PC-9 (cell line): ENCODE measurements at regions of chr7 and their contacts with region 1.

Region 1: DNA sequence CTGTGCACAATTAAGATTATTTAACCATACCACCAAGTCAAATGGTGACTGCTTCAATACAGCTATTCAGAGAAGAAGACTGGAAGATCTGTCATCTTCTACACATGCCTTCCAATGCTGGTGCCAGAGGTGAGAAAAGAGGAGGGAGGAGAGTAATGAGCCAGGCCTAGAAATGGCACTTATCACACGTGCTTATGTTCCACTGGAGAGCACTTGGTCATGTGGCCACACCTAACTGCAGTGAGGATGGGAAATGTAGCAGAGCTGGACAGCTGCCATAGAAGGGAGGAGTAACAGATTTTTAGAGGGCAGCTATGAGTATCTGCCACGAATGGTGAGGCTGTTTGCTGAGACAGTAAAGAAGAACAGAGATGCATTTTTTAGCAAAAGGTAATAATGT is 77.1 kb downstream of the MPLKIP start:
- DNase-seq: no peak
- H3K4me3 ChIP-seq: no peak overlapping the region
- H3K27ac ChIP-seq: no peak overlapping the region
- H3K4me1 ChIP-seq: no peaks in the 10 kb centered on the region
- H3K27me3 ChIP-seq: no peaks in the 10 kb centered on the region
- CTCF ChIP-seq: no peak

Region 2: GRCh38 chr7:39580149-39580874 is 477.0 kb before region 1 on chr7:
- CTCF ChIA-PET with region 1: interaction called, 13 read pairs
- POLR2A ChIA-PET with region 1: no interaction called
- intact Hi-C with region 1: loop called (anchors 2 kb)
- DNase-seq: peak; percentile 75 to 81
- H3K4me3 ChIP-seq: no peak overlapping the region
- H3K27ac ChIP-seq: no peak overlapping the region
- H3K4me1 ChIP-seq: no peaks in the 10 kb centered on the region
- H3K27me3 ChIP-seq: no peaks in the 10 kb centered on the region
- CTCF ChIP-seq: peak; percentile 97

Region 3: GRCh38 chr7:39746103-39746819 is 311.0 kb before region 1 on chr7:
- CTCF ChIA-PET with region 1: interaction called, 3 read pairs
- POLR2A ChIA-PET with region 1: no interaction called
- intact Hi-C with region 1: loop called (anchors 10 kb)
- DNase-seq: peak; percentile 57 to 73
- H3K4me3 ChIP-seq: no peak overlapping the region
- H3K27ac ChIP-seq: no peak overlapping the region
- H3K4me1 ChIP-seq: peaks cover 6% of the 10 kb centered on the region
- H3K27me3 ChIP-seq: no peaks in the 10 kb centered on the region
- CTCF ChIP-seq: peak; percentile 94

Region 4: GRCh38 chr7:39894904-39895303 is 162.4 kb before region 1 on chr7:
- CTCF ChIA-PET with region 1: interaction called, 8 read pairs
- POLR2A ChIA-PET with region 1: no interaction called
- intact Hi-C with region 1: loop called (anchors 1 kb)
- DNase-seq: no peak
- H3K4me3 ChIP-seq: no peak overlapping the region
- H3K27ac ChIP-seq: no peak overlapping the region
- H3K4me1 ChIP-seq: peaks cover 29% of the 10 kb centered on the region
- H3K27me3 ChIP-seq: no peaks in the 10 kb centered on the region
- CTCF ChIP-seq: no peak

Region 5: GRCh38 chr7:40015790-40016296 is 41.4 kb before region 1 on chr7:
- CTCF ChIA-PET with region 1: interaction called, 12 read pairs
- POLR2A ChIA-PET with region 1: no interaction called
- intact Hi-C with region 1: no loop called
- DNase-seq: no peak
- H3K4me3 ChIP-seq: no peak overlapping the region
- H3K27ac ChIP-seq: no peak overlapping the region
- H3K4me1 ChIP-seq: no peaks in the 10 kb centered on the region
- H3K27me3 ChIP-seq: no peaks in the 10 kb centered on the region
- CTCF ChIP-seq: no peak

Region 6: DNA sequence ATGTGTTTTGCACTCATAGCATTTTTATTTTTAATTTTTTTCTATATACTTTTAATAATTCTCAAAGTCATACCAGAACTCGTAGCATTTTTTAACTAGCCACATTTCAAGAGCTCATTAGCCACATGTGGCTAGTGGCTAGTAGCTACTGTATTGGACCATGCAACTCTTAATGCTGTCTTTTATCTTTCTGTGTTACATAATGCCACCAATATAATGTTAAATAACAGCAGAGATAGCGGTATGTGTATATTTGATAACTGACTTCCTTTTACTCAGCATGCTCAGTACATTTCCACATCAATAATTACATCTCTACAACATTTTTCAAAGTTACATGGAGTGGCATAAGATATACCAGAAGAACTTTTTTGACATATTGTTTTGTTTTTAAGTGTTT is 15.8 kb before region 1 on chr7:
- CTCF ChIA-PET with region 1: interaction called, 15 read pairs
- POLR2A ChIA-PET with region 1: no interaction called
- intact Hi-C with region 1: no loop called
- DNase-seq: no peak
- H3K4me3 ChIP-seq: no peak overlapping the region
- H3K27ac ChIP-seq: no peak overlapping the region
- H3K4me1 ChIP-seq: no peaks in the 10 kb centered on the region
- H3K27me3 ChIP-seq: no peaks in the 10 kb centered on the region
- CTCF ChIP-seq: no peak